Lower lobe of right lung (tissue), 2 donors: ENCODE measurements at regions of chr4 and their contacts with region 1.

Region 1: DNA sequence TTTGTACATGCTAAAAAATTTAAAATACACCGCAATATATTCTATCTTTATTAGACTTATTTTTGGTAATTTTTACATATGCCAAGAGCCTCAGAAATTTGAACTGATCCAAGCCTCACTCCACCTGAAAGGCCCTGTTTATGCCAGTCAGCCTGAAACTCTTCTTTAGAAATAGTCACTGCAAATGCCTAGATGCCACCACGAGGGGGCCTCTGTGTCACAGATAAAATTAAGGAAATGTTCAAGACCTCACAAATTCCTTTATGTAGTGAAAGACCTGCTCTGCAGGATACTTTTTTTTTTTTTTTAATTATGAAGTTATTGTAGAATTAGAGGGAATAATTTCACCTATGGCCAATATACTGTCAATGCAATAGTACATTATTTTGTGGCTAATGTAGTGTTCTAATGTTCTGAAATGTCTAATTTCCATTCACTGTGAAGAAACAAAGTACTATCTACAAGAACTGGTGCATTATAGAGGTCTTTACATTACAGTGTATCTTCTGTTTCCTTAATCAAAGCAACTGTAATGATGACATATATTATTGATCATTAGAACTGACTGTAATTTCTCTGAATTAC is 69.8 kb downstream of the DTHD1 start:
- DNase-seq: peak; percentile 69
- ATAC-seq: peak; percentile 73 to 81
- H3K4me3 ChIP-seq: no peak overlapping the region
- H3K27ac ChIP-seq: peak overlapping the region; percentile 12
- H3K4me1 ChIP-seq: no peaks in the 10 kb centered on the region
- H3K27me3 ChIP-seq: no peaks in the 10 kb centered on the region
- CTCF ChIP-seq: peak; percentile 81

Region 2: DNA sequence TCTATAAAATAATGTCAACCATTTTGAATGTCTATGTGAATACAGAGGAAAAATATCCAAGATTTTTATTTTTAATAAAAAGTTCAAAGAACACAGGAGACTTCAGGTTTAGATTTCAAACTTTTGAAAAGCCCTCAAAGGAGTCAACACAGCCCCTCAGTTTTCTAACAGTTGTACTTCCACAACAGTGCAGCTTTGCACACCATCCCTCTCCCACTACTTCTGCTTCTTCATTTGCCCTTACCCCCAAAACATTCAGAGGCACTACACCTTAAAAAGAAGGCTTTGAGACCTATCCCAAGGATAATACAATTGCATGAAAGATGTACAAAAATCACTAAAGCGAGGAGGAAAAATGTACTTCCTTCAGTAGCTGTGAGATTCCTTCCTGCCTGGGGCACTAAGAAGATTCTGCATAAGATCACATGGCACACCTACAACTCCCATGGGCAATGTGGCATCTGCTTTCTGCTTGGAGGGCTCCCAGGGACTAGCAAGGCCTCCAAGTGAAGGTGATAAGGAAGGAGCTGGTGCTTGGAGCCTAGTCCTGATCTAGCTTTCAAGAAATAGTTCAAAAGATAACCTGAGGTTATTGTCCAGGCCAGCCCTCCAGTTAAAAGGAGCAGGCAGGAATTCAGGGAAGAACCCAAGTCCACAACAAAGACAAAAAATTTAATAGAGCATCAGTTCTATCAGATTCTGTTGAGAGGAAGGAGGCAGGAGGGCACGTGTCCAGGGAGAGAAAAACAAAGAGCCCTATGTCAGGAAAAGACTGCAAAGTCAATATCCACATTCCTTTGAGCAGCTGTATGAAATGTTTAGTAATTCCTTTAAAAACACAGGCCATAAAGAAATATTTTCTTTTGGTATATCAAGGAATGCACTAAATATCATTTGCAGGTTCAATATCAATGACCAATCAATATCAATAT is 125.9 kb before region 1 on chr4:
- intact Hi-C with region 1: no loop called
- DNase-seq: no peak
- ATAC-seq: no peak
- H3K4me3 ChIP-seq: no peak overlapping the region
- H3K27ac ChIP-seq: no peak overlapping the region
- H3K4me1 ChIP-seq: peaks cover 16% of the 10 kb centered on the region
- H3K27me3 ChIP-seq: no peaks in the 10 kb centered on the region
- CTCF ChIP-seq: no peak

Region 3: DNA sequence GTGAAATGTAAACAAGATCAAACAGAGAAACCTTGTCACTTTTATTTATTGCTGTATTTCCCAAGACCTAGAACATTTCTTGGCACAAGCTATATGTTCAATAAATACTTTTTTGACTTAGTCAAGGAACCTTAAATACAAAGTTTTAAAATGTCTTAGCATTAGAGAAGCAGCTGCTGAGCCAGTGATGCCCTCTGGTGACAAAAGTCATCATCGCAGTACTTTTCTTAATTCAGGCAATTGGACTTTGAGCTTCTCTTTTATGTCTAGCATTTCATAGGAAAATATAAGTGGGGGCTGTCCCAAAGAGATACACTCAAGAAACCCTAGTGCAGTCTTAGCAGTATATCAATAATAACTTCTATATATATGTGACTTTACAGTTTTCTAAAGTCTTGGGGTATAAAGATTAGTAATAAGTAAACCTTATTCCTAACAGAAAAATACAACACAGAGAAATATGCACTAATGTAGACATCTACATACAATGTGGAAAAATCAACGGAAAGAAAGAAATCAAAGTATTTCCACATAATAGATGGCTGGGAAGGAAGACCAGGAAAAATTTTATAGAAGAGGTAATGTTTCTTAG is 48.7 kb after region 1 on chr4:
- intact Hi-C with region 1: loop called (anchors 5 kb)
- DNase-seq: no peak
- ATAC-seq: peak in 1 of 2 donors; percentile 61
- H3K4me3 ChIP-seq: no peak overlapping the region
- H3K27ac ChIP-seq: no peak overlapping the region
- H3K4me1 ChIP-seq: no peaks in the 10 kb centered on the region
- H3K27me3 ChIP-seq: no peaks in the 10 kb centered on the region
- CTCF ChIP-seq: peak; percentile 65